Psoas muscle (tissue), 8 donors: ENCODE measurements at regions of chr10 and their contacts with region 1.

Region 1: GRCh38 chr10:95236068-95236903 is 42.2 kb downstream of the ACSM6 start:
- DNase-seq: no peak
- ATAC-seq: peak; percentile 26 to 52 (median 35)
- H3K4me3 ChIP-seq: no peak overlapping the region
- H3K27ac ChIP-seq: no peak overlapping the region
- H3K4me1 ChIP-seq: peaks cover 8% of the 10 kb centered on the region
- H3K27me3 ChIP-seq: no peaks in the 10 kb centered on the region
- CTCF ChIP-seq: no peak

Region 2: DNA sequence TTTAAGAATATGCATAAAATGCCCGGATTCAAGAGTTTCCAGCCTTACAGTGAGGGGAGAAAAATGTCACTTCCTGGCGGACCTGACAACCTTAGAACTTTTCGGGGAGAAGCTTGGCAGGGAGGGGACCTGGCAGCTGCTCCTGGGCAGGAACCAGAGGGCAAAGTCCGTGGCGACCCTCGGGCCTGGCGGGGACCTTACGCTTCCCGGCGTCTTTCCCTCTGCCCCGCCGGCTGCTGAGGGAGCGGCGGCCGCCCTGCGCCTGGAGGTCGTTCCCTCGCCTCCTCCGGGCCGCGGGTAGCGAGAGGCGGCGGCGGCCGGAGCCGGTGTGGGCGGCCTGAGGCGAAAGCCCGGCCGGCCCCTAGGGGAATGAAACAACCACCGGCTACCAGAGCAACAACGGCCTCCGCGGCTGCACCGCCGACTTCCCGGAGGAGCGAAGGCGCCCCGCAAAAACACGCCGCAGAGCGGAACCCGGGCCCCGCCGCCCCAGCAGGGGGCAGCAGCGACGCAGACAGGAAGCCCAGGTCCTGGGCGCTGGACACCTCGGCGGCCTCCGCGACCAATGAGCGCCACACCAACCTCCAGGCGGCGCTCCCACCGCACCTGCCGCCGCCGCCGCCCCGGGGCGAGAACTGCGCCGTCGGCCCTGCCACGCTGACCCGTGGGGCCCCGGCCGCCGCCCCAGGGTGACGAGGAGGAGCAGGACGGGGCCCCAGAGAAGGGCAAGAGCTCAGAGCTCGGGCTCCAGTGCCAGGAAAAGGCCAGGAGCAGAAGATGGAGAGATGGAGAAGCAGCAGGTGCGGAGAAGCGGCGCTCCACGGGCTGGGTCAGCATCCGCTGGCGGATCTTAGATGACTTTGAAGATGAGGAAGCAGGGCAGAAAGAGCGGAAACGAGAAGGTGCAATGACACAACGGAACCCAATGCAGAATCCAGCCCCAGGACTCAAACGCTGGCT is 52.7 kb before region 1 on chr10:
- intact Hi-C with region 1: loop called in 1 of 2 experiments (anchors 5 kb)
- DNase-seq: peak; percentile 87 to 90
- ATAC-seq: peak; percentile 94 to 99 (median 98)
- H3K4me3 ChIP-seq: peak overlapping the region; percentile 72
- H3K27ac ChIP-seq: peak overlapping the region; percentile 50
- H3K4me1 ChIP-seq: peaks cover 4% of the 10 kb centered on the region
- H3K27me3 ChIP-seq: no peaks in the 10 kb centered on the region
- CTCF ChIP-seq: peak; percentile 87